ENCODE measurements at regions of chr3 and their contacts with region 1.

Region 1: DNA sequence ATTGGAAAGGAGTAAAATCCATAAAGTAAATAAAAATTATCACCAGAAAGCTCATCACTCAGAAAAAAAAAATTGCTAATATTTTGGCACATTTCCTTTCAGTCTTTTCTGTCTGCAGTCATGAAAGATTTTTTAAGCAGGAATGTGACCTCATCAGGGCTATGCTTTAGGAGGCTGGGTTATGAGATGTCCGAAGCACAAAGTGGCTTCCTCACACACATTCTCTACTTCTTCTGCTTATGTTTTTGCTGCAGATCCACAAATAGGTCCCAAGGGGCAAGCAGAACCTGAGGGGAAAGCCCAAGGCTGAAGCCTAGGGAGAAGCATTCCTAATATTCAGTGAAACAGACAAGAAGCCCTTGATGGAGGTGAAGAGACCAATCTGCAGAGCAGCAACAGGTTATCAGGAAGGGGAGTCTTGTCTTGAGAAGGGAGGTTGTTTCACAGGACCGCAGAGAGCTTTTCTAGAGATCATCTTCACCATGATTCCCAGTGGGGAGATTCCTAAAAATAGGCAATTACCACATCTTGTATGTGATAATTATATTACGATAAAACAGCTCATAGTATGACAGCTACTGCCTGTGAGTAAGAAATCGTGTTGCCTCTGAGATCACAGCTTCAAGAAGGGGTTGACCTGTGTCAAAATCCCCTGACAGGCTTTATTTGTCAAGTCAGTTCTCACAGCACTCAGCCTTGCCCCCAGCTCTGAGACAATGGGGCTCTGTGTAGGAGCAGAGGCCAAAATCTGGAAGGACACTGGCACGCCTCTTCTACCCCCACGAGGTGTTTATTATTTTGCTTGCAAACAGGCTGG is 60.5 kb downstream of the IGF2BP2 start:
- DNase-seq: no peak
- H3K4me3 ChIP-seq: no peak overlapping the region
- H3K27ac ChIP-seq: no peak overlapping the region
- H3K27me3 ChIP-seq: no peaks in the 10 kb centered on the region
- CTCF ChIP-seq: no peak

Region 2: DNA sequence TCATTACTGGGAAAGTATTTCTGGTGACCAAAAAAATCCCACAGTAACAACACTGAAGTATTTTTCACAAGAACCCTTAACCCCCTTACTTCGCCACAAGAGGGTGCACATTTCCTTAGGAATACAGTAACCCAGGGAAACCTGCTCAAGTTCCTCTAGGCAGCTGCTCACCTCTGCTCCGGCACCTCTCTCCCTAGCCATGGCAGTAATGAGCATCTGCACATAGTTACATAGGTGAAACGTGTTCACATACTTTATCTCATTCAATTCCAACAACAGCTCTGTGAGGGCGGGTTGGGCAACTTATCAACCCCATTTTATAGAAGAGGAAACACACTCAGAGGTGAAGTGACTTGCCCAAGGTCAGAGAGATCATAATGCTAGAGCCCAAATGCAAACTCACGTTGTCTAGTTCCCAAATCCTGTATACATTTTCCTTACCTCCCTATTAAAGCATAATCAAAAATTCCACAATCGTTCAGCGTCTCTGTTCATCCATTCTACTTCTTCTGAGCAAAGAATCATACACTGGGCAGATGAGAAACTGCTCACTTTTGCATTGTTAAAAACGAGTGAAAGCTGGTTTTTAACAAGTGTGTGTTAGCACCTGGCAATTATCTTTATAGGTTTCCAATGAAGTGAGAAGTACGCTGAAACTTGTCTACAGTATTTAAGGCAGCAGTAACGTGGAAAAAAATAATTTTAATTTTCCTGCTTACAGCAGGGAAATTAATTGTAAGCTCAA is 30.2 kb before region 1 on chr3:
- CTCF ChIA-PET with region 1: interaction called, 20 read pairs
- POLR2A ChIA-PET with region 1: interaction called, 5 read pairs
- DNase-seq: peak; percentile 72
- H3K4me3 ChIP-seq: no peak overlapping the region
- H3K27ac ChIP-seq: no peak overlapping the region
- H3K27me3 ChIP-seq: no peaks in the 10 kb centered on the region
- CTCF ChIP-seq: peak; percentile 76

Region 3: DNA sequence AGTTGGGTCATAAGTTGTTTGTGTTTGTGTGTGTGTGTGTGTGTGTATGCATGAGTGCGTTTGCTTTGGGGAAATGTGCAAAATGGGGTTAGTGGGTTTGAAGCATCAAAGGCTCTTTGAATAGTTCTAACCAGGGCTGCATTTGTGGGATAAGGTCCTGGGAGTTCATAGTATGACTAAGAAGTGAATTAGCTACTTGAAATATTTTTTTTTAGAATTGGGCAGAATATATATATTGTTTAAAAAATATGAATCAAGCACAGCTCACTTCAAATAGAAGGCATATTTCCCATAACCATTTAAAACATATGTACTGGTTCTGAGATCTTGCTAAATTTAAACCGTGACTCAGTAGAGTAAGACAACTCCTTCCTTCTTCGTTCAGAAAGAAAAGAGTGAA is 17.4 kb after region 1 on chr3:
- CTCF ChIA-PET with region 1: interaction called, 70 read pairs
- POLR2A ChIA-PET with region 1: no interaction called
- DNase-seq: peak; percentile 51
- H3K4me3 ChIP-seq: no peak overlapping the region
- H3K27ac ChIP-seq: no peak overlapping the region
- H3K27me3 ChIP-seq: no peaks in the 10 kb centered on the region
- CTCF ChIP-seq: no peak

Region 4: DNA sequence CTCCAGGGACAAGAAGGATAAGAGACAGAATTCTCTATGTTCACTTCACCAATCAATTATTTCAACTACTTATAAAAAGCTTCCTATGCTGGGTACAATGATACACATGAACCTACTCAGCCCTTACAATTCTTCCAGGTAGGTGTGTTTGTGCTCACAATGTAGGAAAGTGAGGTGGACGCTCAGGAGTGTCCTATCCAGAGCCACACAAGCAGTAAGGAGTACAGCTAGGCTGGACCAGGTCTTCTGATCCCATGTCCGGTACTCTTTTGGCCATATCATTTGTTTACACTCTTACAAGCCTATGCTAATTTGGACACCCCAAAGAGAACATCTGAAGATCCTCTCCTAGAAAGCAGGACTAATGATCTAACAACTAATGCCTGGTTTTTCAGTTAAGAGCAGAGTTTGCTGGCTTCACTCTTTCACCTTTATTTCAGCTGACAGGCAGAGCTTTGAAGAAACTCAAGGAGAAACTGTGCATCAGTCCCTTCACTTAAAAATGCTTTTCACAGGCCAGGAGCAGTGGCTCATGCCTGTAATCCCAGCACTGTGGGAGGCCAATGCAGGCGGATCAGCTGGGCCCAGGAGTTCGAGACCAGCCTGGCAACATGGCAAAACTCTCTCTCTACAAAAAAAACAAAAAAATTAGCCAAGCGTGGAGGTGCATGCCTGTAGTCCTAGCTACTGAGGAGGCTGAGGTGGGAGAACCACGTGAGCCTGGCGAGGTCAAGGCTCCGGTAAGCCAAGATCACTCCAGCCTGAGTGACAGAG is 32.9 kb after region 1 on chr3:
- CTCF ChIA-PET with region 1: interaction called, 17 read pairs
- POLR2A ChIA-PET with region 1: no interaction called
- DNase-seq: no peak
- H3K4me3 ChIP-seq: no peak overlapping the region
- H3K27ac ChIP-seq: no peak overlapping the region
- H3K27me3 ChIP-seq: no peaks in the 10 kb centered on the region
- CTCF ChIP-seq: no peak